ENCODE measurements at regions of chr11 and their contacts with region 1.

Region 1: DNA sequence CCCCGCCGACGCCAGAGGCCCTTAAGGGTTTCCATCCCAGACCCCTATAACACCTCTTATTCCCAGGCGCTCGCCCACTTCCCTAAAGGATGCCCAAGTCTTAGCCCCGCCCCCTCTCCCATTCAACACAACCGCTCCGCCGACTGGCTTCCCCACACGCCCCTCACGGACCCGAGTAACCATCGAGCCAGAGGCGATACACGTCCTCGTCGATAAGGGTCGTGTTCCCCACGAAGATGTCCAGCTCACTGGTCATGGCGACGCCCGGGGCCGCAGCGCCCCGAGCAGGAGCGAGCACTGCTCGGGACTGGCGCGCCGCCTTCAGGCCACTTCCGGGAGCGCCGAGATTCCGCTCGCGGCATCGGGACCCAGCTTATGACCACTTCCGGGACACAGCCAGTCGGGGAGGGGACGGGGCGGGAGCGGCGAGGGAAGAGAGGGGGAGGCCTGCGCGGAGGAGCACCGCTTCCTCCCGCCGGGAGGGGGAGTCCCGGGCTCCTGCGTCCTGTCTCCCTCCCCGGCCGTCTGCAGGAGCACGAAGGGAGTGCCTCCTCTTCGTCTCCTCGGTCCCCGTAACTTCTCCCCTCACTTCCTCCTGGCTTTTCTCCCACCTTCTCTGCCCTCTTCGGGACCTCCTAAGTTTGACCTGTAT is at the start of gene FIBP:
- DNase-seq: peak; percentile 94
- H3K4me3 ChIP-seq: peak within 1 kb of the TSS; percentile 90
- H3K27ac ChIP-seq: peak within 1 kb of the TSS; percentile 98
- H3K27me3 ChIP-seq: no peaks in the 10 kb centered on the region
- CTCF ChIP-seq: peak; percentile 74
- polyA plus RNA-seq, gene FIBP: 126 and 160 TPM in 2 replicates

Region 2: DNA sequence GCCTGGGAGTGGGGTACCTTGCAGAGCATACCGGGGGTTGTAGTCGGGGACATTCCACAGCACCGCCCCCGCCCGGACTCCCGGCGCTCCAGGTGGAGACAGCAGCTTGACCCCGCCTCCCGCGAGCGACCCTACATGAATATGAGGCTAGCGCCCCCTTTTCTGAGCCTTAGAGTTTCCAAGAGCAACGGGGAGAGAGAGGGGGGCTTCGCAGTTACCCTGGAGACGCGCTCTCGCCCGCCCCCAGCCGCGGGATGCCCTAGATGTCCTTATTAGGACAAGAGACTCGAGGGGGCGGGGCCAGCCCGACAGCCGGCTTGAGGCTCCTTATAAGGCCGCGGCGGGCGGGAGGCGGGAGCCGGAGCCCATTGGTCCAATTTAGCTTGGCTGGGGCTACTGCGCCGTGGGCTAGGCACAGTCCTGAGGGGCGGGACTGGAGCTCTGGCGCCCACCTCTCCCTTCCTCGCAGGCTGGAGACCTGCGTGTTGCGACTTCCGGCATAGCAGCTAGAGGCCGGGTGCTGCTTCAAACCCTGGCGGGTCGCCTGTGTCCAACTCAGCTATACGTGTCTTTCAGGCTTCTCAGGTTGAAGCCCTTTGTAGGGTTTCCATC is 29.0 kb before region 1 on chr11:
- CTCF ChIA-PET with region 1: interaction called, 39 read pairs
- POLR2A ChIA-PET with region 1: interaction called, 65 read pairs
- DNase-seq: peak; percentile 97
- H3K4me3 ChIP-seq: peak overlapping the region; percentile 93
- H3K27ac ChIP-seq: peak overlapping the region; percentile 99
- H3K27me3 ChIP-seq: no peaks in the 10 kb centered on the region
- CTCF ChIP-seq: peak; percentile 28; the same call in 1 of the 2 replicates

Region 3: DNA sequence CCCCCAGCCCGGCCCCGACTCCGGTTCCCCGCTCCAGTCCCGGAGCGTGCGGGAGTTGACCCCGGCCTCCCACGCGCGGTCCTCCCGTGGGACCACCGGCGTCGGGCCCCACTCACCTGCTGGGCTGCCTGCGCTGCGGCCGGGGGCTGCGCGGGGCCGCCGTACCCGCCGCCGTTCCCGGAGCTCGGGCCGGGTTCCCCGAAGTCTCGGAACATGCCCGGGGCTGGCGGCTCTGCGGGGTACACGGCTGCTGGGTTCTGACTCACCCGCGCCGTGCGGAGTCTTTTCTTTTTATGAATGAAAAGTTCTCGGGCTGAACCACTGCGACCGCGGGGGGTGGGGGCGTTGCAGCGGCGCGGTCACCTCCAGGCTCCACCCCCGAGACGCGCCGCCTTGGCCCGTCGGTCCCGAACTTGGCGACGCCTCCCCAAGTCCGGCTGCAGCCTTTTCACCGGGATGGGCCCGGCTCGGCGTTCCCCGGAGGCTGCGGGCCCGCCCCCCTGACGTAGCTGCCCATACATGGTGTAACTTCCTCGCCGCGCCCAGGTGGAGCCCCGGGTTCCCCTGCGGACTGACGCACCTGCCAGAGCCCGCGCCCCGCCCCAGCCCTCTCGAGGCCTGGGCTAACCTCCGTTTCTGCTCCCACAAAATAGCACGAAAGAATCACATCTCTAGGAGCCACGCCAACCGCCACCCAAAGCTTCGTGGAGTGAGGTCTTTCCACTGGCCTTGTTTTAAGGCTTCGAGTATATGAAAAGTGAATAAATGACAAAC is 12.0 kb after region 1 on chr11 and contains the start of gene FOSL1:
- CTCF ChIA-PET with region 1: interaction called, 34 read pairs
- POLR2A ChIA-PET with region 1: interaction called, 153 read pairs
- DNase-seq: peak; percentile 89
- H3K4me3 ChIP-seq: peak within 1 kb of the TSS; percentile 96
- H3K27ac ChIP-seq: peak within 1 kb of the TSS; percentile 97
- H3K27me3 ChIP-seq: no peaks in the 10 kb centered on the region
- CTCF ChIP-seq: no peak
- polyA plus RNA-seq, gene FOSL1: 7.9 and 16.1 TPM in 2 replicates

Region 4: GRCh38 chr11:65941720-65942310 is 53.5 kb after region 1 on chr11:
- CTCF ChIA-PET with region 1: interaction called, 10 read pairs
- POLR2A ChIA-PET with region 1: interaction called, 3 read pairs
- DNase-seq: no peak
- H3K4me3 ChIP-seq: no peak overlapping the region
- H3K27ac ChIP-seq: peak overlapping the region; percentile 75
- H3K27me3 ChIP-seq: no peaks in the 10 kb centered on the region
- CTCF ChIP-seq: no peak

Region 5: GRCh38 chr11:65976216-65977176 is 88.2 kb after region 1 on chr11:
- CTCF ChIA-PET with region 1: interaction called, 13 read pairs
- POLR2A ChIA-PET with region 1: interaction called, 7 read pairs
- DNase-seq: no peak
- H3K4me3 ChIP-seq: no peak overlapping the region
- H3K27ac ChIP-seq: no peak overlapping the region
- H3K27me3 ChIP-seq: no peaks in the 10 kb centered on the region
- CTCF ChIP-seq: no peak

Region 6: GRCh38 chr11:66022401-66023185 is 134.3 kb after region 1 on chr11:
- CTCF ChIA-PET with region 1: interaction called, 14 read pairs
- POLR2A ChIA-PET with region 1: no interaction called
- DNase-seq: no peak
- H3K4me3 ChIP-seq: no peak overlapping the region
- H3K27ac ChIP-seq: no peak overlapping the region
- H3K27me3 ChIP-seq: no peaks in the 10 kb centered on the region
- CTCF ChIP-seq: peak; percentile 92